CD8-positive, alpha-beta T cell (primary cell): ENCODE measurements at regions of chr5 and their contacts with region 1.

Region 1: GRCh38 chr5:132963175-132964104 is at the start of gene AFF4:
- DNase-seq: peak; percentile 69 to 93 (median 84)
- ATAC-seq: peak; percentile 75
- H3K4me3 ChIP-seq: peak within 1 kb of the TSS; percentile 52 to 71
- H3K4me3 Mint-ChIP-seq: peak within 1 kb of the TSS; percentile 95
- H3K27ac ChIP-seq: peak within 1 kb of the TSS; percentile 84 to 92
- H3K27ac Mint-ChIP-seq: peak within 1 kb of the TSS; percentile 99
- H3K4me1 ChIP-seq: peaks cover 35% of the 10 kb centered on the region
- H3K4me1 Mint-ChIP-seq: peaks cover 43% of the 10 kb centered on the region
- H3K27me3 ChIP-seq: no peaks in the 10 kb centered on the region
- H3K27me3 Mint-ChIP-seq: no peaks in the 10 kb centered on the region
- CTCF ChIP-seq: no peak
- total RNA-seq, gene AFF4: 98.0 to 104 TPM

Region 2: DNA sequence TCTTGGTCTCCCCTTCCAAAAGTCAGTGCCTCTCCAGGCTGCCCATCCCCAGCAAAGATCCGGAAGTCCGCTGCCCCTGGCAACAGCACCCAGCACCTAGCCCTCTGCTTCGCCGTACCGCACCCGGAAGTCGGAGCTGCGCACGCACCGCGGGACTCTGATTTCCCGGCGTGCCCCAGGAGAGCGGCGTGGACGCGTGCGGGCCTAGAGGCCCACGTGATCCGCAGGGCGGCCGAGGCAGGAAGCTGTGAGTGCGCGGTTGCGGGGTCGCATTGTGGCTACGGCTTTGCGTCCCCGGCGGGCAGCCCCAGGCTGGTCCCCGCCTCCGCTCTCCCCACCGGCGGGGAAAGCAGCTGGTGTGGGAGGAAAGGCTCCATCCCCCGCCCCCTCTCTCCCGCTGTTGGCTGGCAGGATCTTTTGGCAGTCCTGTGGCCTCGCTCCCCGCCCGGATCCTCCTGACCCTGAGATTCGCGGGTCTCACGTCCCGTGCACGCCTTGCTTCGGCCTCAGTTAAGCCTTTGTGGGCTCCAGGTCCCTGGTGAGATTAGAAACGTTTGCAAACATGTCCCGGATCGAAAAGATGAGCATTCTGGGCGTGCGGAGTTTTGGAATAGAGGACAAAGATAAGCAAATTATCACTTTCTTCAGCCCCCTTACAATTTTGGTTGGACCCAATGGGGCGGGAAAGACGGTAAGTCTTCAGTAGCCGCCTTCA is 406.5 kb before region 1 on chr5 and contains the start of gene RAD50:
- CTCF ChIA-PET with region 1: no interaction called
- POLR2A ChIA-PET with region 1: no interaction called
- intact Hi-C with region 1: loop called (anchors 2 to 10 kb)
- DNase-seq: peak; percentile 83 to 96 (median 91)
- ATAC-seq: peak; percentile 95
- H3K4me3 ChIP-seq: peak within 1 kb of the TSS; percentile 62 to 97
- H3K4me3 Mint-ChIP-seq: peak within 1 kb of the TSS; percentile 98
- H3K27ac ChIP-seq: peak within 1 kb of the TSS; percentile 68 to 91
- H3K27ac Mint-ChIP-seq: peak within 1 kb of the TSS; percentile 98
- H3K4me1 ChIP-seq: peaks cover 21% of the 10 kb centered on the region
- H3K4me1 Mint-ChIP-seq: peaks cover 28% of the 10 kb centered on the region
- H3K27me3 ChIP-seq: no peaks in the 10 kb centered on the region
- H3K27me3 Mint-ChIP-seq: no peaks in the 10 kb centered on the region
- CTCF ChIP-seq: no peak
- total RNA-seq, gene RAD50: 8.0 to 8.7 TPM

Region 3: GRCh38 chr5:132746954-132747615 is 216.4 kb before region 1 on chr5 and contains the start of gene CCNI2:
- CTCF ChIA-PET with region 1: interaction called, 3 read pairs
- POLR2A ChIA-PET with region 1: no interaction called
- intact Hi-C with region 1: loop called in 1 of 2 experiments (anchors 2 kb)
- DNase-seq: peak; percentile 34 to 82 (median 65)
- ATAC-seq: peak; percentile 85
- H3K4me3 ChIP-seq: peak within 1 kb of the TSS; percentile 57 to 59
- H3K4me3 Mint-ChIP-seq: peak within 1 kb of the TSS; percentile 84
- H3K27ac ChIP-seq: peak within 1 kb of the TSS; percentile 29 to 36
- H3K27ac Mint-ChIP-seq: peak within 1 kb of the TSS; percentile 67
- H3K4me1 ChIP-seq: peaks cover 8% of the 10 kb centered on the region
- H3K4me1 Mint-ChIP-seq: peaks cover 11% of the 10 kb centered on the region
- H3K27me3 ChIP-seq: peaks cover 0 to 3% of the 10 kb centered on the region in 2 experiments
- H3K27me3 Mint-ChIP-seq: no peaks in the 10 kb centered on the region
- CTCF ChIP-seq: peak; percentile 45
- total RNA-seq, gene CCNI2: 4.4 to 6.3 TPM

Region 4: GRCh38 chr5:132996307-132996706 is 32.9 kb after region 1 on chr5:
- CTCF ChIA-PET with region 1: no interaction called
- POLR2A ChIA-PET with region 1: no interaction called
- intact Hi-C with region 1: no loop called
- DNase-seq: no peak
- ATAC-seq: no peak
- H3K4me3 ChIP-seq: no peak overlapping the region
- H3K4me3 Mint-ChIP-seq: no peak overlapping the region
- H3K27ac ChIP-seq: no peak overlapping the region
- H3K27ac Mint-ChIP-seq: no peak overlapping the region
- H3K4me1 ChIP-seq: no peaks in the 10 kb centered on the region
- H3K4me1 Mint-ChIP-seq: no peaks in the 10 kb centered on the region
- H3K27me3 ChIP-seq: no peaks in the 10 kb centered on the region
- H3K27me3 Mint-ChIP-seq: no peaks in the 10 kb centered on the region
- CTCF ChIP-seq: no peak

Region 5: GRCh38 chr5:133025804-133026663 is 62.6 kb after region 1 on chr5 and contains the start of gene ZCCHC10:
- CTCF ChIA-PET with region 1: interaction called, 4 read pairs
- POLR2A ChIA-PET with region 1: interaction called, 15 read pairs
- intact Hi-C with region 1: loop called (anchors 1 kb)
- DNase-seq: peak; percentile 82 to 95 (median 92)
- ATAC-seq: peak; percentile 99
- H3K4me3 ChIP-seq: peak within 1 kb of the TSS; percentile 98 to 100
- H3K4me3 Mint-ChIP-seq: peak within 1 kb of the TSS; percentile 97
- H3K27ac ChIP-seq: peak within 1 kb of the TSS; percentile 86 to 95
- H3K27ac Mint-ChIP-seq: peak within 1 kb of the TSS; percentile 94
- H3K4me1 ChIP-seq: peaks cover 4% of the 10 kb centered on the region
- H3K4me1 Mint-ChIP-seq: peaks cover 25% of the 10 kb centered on the region
- H3K27me3 ChIP-seq: no peaks in the 10 kb centered on the region
- H3K27me3 Mint-ChIP-seq: no peaks in the 10 kb centered on the region
- CTCF ChIP-seq: no peak
- total RNA-seq, gene ZCCHC10: 22.3 to 22.7 TPM

Region 6: GRCh38 chr5:133063965-133064364 is 100.5 kb after region 1 on chr5:
- CTCF ChIA-PET with region 1: no interaction called
- POLR2A ChIA-PET with region 1: no interaction called
- intact Hi-C with region 1: no loop called
- DNase-seq: no peak
- ATAC-seq: no peak
- H3K4me3 ChIP-seq: no peak overlapping the region
- H3K4me3 Mint-ChIP-seq: no peak overlapping the region
- H3K27ac ChIP-seq: no peak overlapping the region
- H3K27ac Mint-ChIP-seq: no peak overlapping the region
- H3K4me1 ChIP-seq: peaks cover 20% of the 10 kb centered on the region
- H3K4me1 Mint-ChIP-seq: peaks cover 41% of the 10 kb centered on the region
- H3K27me3 ChIP-seq: no peaks in the 10 kb centered on the region
- H3K27me3 Mint-ChIP-seq: no peaks in the 10 kb centered on the region
- CTCF ChIP-seq: no peak

Region 7: GRCh38 chr5:133154274-133155074 is 191.0 kb after region 1 on chr5:
- CTCF ChIA-PET with region 1: no interaction called
- POLR2A ChIA-PET with region 1: no interaction called
- intact Hi-C with region 1: no loop called
- DNase-seq: no peak
- ATAC-seq: no peak
- H3K4me3 ChIP-seq: no peak overlapping the region
- H3K4me3 Mint-ChIP-seq: no peak overlapping the region
- H3K27ac ChIP-seq: no peak overlapping the region
- H3K27ac Mint-ChIP-seq: no peak overlapping the region
- H3K4me1 ChIP-seq: no peaks in the 10 kb centered on the region
- H3K4me1 Mint-ChIP-seq: no peaks in the 10 kb centered on the region
- H3K27me3 ChIP-seq: no peaks in the 10 kb centered on the region
- H3K27me3 Mint-ChIP-seq: no peaks in the 10 kb centered on the region
- CTCF ChIP-seq: no peak

Region 8: GRCh38 chr5:134845852-134846640 is 1882.6 kb after region 1 on chr5 and contains the start of gene C5orf24:
- CTCF ChIA-PET with region 1: no interaction called
- POLR2A ChIA-PET with region 1: no interaction called
- intact Hi-C with region 1: loop called in 1 of 2 experiments (anchors 2 kb)
- DNase-seq: peak; percentile 82 to 98 (median 90)
- ATAC-seq: peak; percentile 92
- H3K4me3 ChIP-seq: peak within 1 kb of the TSS; percentile 85 to 94
- H3K4me3 Mint-ChIP-seq: peak within 1 kb of the TSS; percentile 87
- H3K27ac ChIP-seq: peak within 1 kb of the TSS; percentile 84 to 91
- H3K27ac Mint-ChIP-seq: peak within 1 kb of the TSS; percentile 94
- H3K4me1 ChIP-seq: peaks cover 18% of the 10 kb centered on the region
- H3K4me1 Mint-ChIP-seq: peaks cover 34% of the 10 kb centered on the region
- H3K27me3 ChIP-seq: no peaks in the 10 kb centered on the region
- H3K27me3 Mint-ChIP-seq: no peaks in the 10 kb centered on the region
- CTCF ChIP-seq: no peak
- total RNA-seq, gene C5orf24: 29.9 to 31.0 TPM